MCF 10A (cell line): ENCODE measurements at regions of chr6 and their contacts with region 1.

Region 1: GRCh38 chr6:4402439-4402976 is 267.1 kb upstream of the ECI2 start:
- DNase-seq: peak; percentile 88
- H3K4me3 Mint-ChIP-seq: peak overlapping the region; percentile 43
- H3K27ac Mint-ChIP-seq: peak overlapping the region; percentile 57
- H3K4me1 Mint-ChIP-seq: peaks cover 17% of the 10 kb centered on the region
- H3K27me3 Mint-ChIP-seq: no peaks in the 10 kb centered on the region
- CTCF ChIP-seq: no peak

Region 2: DNA sequence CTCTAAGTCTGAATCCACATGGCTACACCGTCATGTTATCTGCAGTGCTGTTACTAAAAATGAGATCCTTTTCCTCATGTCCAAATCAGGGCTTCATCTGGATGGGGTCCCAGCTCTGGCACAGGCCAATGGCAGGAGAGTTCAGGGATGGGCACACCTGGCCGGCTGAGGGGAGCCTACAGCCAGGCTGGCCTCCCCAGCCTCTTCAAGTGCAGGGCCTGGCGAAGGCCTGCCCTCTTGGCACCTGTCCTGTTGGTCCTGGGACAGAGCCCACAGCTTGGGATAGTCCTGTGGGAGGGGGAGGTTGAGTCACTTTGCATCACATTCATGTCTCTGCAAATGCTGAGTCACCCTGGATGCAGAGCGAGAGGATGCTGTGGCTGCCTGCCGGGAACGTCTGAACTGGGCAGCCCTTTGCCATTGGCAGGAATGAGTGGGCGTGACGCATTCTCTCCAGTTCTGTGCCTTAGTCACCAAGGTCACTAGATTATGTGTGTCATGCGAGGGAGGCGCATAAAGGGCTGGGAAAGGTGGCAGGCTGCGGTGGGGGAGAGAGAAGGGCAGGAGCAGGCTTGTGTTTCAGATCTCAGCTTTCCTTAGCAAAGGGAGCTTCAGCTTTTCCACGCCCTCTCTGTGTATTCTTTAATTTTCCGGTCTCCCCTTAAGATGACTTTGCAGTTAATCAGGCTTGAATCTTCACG is 43.9 kb before region 1 on chr6:
- CTCF ChIA-PET with region 1: no interaction called
- POLR2A ChIA-PET with region 1: interaction called, 4 read pairs
- intact Hi-C with region 1: loop called (anchors 5 kb)
- DNase-seq: peak; percentile 100
- H3K4me3 Mint-ChIP-seq: peak overlapping the region; percentile 40
- H3K27ac Mint-ChIP-seq: peak overlapping the region; percentile 97
- H3K4me1 Mint-ChIP-seq: peaks cover 30% of the 10 kb centered on the region
- H3K27me3 Mint-ChIP-seq: no peaks in the 10 kb centered on the region
- CTCF ChIP-seq: no peak

Region 3: GRCh38 chr6:4714961-4715501 is 312.5 kb after region 1 on chr6:
- CTCF ChIA-PET with region 1: no interaction called
- POLR2A ChIA-PET with region 1: no interaction called
- intact Hi-C with region 1: no loop called
- DNase-seq: peak; percentile 48
- H3K4me3 Mint-ChIP-seq: no peak overlapping the region
- H3K27ac Mint-ChIP-seq: no peak overlapping the region
- H3K4me1 Mint-ChIP-seq: peaks cover 5% of the 10 kb centered on the region
- H3K27me3 Mint-ChIP-seq: no peaks in the 10 kb centered on the region
- CTCF ChIP-seq: no peak

Region 4: GRCh38 chr6:4928426-4928825 is 525.9 kb after region 1 on chr6:
- CTCF ChIA-PET with region 1: no interaction called
- POLR2A ChIA-PET with region 1: no interaction called
- intact Hi-C with region 1: no loop called
- DNase-seq: no peak
- H3K4me3 Mint-ChIP-seq: no peak overlapping the region
- H3K27ac Mint-ChIP-seq: no peak overlapping the region
- H3K4me1 Mint-ChIP-seq: peaks cover 27% of the 10 kb centered on the region
- H3K27me3 Mint-ChIP-seq: no peaks in the 10 kb centered on the region
- CTCF ChIP-seq: no peak